GM12878 (cell line): ENCODE measurements at regions of chr5 and their contacts with region 1.

Region 1: DNA sequence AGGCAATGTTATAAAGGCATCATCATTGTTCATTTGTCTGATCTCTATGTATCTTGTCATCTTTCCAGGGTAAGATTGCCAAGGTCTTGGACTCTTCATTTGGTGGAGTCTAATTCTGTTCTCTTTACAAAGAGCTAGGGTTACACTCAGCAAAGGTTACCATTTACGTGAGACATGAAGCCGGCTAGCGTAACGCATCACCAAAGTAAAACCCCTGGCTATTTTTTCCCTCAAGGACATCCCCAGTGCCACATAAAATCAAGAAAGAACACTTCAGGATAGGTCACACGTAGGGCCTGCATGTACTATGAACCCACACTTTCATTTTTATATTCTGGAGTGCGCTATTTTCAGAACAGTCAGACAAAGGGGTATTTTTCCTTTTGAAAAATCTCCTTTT is 20.0 kb upstream of the MYOT start:
- DNase-seq: peak; percentile 33
- ATAC-seq: peak; percentile 90
- H3K4me3 ChIP-seq: peak overlapping the region; percentile 63; the same call in 1 of the 2 replicates
- H3K27ac ChIP-seq: peak overlapping the region; percentile 45
- H3K4me1 ChIP-seq: peaks cover 13% of the 10 kb centered on the region
- H3K27me3 ChIP-seq: no peaks in the 10 kb centered on the region
- CTCF ChIP-seq: no peak
- EP300 ChIP-seq: peak; percentile 11 to 48; a peak in 1 of 4 replicates
- POLR2A ChIP-seq: no peak
- RAD21 ChIP-seq: no peak

Region 2: DNA sequence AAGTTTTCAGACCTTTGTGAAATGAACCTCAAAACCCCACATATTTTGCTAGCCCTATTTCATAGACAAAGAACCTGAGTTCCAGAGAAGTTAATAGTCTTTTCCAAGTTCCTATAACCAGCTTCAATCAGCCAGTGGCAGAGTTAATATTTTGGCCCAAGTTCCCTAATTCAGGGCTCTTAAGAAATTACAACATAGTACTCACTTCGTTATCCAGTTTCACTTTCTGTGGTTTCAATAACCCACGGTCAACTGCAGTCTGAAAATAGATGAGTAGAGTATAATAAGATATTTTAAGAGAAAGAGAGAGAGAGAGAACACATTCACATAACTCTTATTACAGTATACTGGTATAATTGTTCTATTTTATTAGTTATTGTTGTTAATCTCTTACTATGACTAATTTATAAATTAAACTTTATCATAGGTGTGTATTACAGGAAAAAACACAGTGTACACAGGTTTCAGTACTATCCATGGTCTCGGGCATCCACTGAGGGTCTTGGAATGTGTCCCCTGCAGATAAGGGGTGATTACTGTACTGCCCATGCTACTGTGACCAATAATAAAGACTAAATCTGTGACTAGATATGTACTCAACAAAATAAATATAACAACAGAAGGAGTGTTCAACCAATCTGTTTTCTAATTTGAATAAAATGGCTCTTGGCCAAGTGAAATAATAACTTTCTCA is 10.7 kb after region 1 on chr5:
- CTCF ChIA-PET with region 1: interaction called, 5 read pairs
- POLR2A ChIA-PET with region 1: interaction called, 3 read pairs
- RAD21 ChIA-PET with region 1: interaction called, 28 read pairs
- SMC1A ChIA-PET with region 1: interaction called, 18 read pairs
- in situ Hi-C with region 1: no loop called
- intact Hi-C with region 1: no loop called
- DNase-seq: peak; percentile 58
- ATAC-seq: peak; percentile 91
- H3K4me3 ChIP-seq: no peak overlapping the region
- H3K27ac ChIP-seq: peak overlapping the region; percentile 11
- H3K4me1 ChIP-seq: peaks cover 29% of the 10 kb centered on the region
- H3K27me3 ChIP-seq: no peaks in the 10 kb centered on the region
- CTCF ChIP-seq: no peak
- EP300 ChIP-seq: no peak
- POLR2A ChIP-seq: no peak
- RAD21 ChIP-seq: no peak